B cell (primary cell): ENCODE measurements at regions of chr16 and their contacts with region 1.

Region 1: GRCh38 chr16:89700100-89700648 is 1.3 kb downstream of the SPATA2L start:
- DNase-seq: peak; percentile 99
- ATAC-seq: peak; percentile 38
- H3K4me3 ChIP-seq: peak overlapping the region; percentile 17 to 73 (median 68)
- H3K4me3 Mint-ChIP-seq: peak overlapping the region; percentile 85
- H3K27ac ChIP-seq: peak overlapping the region; percentile 76 to 82
- H3K27ac Mint-ChIP-seq: peak overlapping the region; percentile 83
- H3K4me1 ChIP-seq: peaks cover 21 to 29% of the 10 kb centered on the region in 2 donors
- H3K4me1 Mint-ChIP-seq: peaks cover 21% of the 10 kb centered on the region
- H3K27me3 ChIP-seq: no peaks in the 10 kb centered on the region
- H3K27me3 Mint-ChIP-seq: no peaks in the 10 kb centered on the region
- CTCF ChIP-seq: peak; percentile 74

Region 2: DNA sequence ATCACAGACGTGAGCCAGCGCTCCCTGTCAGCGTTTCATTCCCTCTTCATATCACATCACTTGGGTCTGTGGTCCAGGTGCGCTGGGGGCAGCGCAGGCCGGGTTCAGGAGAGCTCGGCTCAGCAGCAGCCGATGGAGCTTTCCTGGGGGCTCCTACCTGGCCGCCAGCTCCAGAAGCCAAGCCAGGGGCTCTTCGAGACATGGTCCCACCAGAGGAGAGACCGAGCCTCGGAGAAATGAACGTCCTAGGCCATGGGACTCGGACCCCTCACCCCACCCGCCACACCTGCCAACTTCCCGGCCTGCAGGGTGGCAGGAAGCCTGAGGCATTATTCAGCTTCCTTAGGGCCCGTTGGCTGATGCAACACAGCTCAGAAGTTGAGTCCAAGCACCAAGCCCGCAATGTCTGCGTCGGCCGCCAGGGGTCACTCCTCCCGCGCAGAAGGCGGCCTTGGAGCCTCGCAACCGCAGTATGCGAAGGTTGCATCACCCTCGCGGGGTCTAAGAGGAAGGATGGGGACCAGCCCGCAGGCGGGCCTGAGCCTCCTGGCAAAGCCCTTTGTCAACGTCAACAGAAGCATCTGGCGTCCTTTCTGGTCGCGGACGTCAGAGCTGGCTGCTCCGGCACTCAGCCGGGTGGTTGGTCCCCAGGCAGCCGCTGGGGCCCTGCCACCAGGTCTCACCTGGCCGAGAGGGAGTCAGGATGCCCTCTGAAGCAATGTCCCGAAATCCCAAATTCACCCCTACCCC is 1921.2 kb before region 1 on chr16:
- CTCF ChIA-PET with region 1: no interaction called
- POLR2A ChIA-PET with region 1: interaction called, 11 read pairs
- intact Hi-C with region 1: no loop called
- DNase-seq: peak; percentile 96
- ATAC-seq: peak; percentile 89
- H3K4me3 ChIP-seq: no peak overlapping the region
- H3K4me3 Mint-ChIP-seq: peak overlapping the region; percentile 75
- H3K27ac ChIP-seq: no peak overlapping the region
- H3K27ac Mint-ChIP-seq: peak overlapping the region; percentile 83
- H3K4me1 ChIP-seq: peaks cover 22 to 40% of the 10 kb centered on the region in 2 donors
- H3K4me1 Mint-ChIP-seq: peaks cover 33% of the 10 kb centered on the region
- H3K27me3 ChIP-seq: no peaks in the 10 kb centered on the region
- H3K27me3 Mint-ChIP-seq: peaks cover 9% of the 10 kb centered on the region
- CTCF ChIP-seq: peak; percentile 93

Region 3: GRCh38 chr16:89657442-89658220 is 42.5 kb before region 1 on chr16 and contains the starts of genes CHMP1A and SPATA33:
- CTCF ChIA-PET with region 1: interaction called, 6 read pairs
- POLR2A ChIA-PET with region 1: interaction called, 3 read pairs
- intact Hi-C with region 1: loop called (anchors 1 kb)
- DNase-seq: peak; percentile 96
- ATAC-seq: peak; percentile 89
- H3K4me3 ChIP-seq: peak within 1 kb of the TSS; percentile 42 to 97 (median 96)
- H3K4me3 Mint-ChIP-seq: peak within 1 kb of the TSS; percentile 89
- H3K27ac ChIP-seq: peak within 1 kb of the TSS; percentile 38 to 88
- H3K27ac Mint-ChIP-seq: peak within 1 kb of the TSS; percentile 85
- H3K4me1 ChIP-seq: peaks cover 14 to 20% of the 10 kb centered on the region in 2 donors
- H3K4me1 Mint-ChIP-seq: peaks cover 27% of the 10 kb centered on the region
- H3K27me3 ChIP-seq: no peaks in the 10 kb centered on the region
- H3K27me3 Mint-ChIP-seq: no peaks in the 10 kb centered on the region
- CTCF ChIP-seq: no peak
- total RNA-seq, gene CHMP1A: 88.1 and 90.0 TPM in 2 replicates
- total RNA-seq, gene SPATA33: 12.6 and 15.0 TPM in 2 replicates

Region 4: DNA sequence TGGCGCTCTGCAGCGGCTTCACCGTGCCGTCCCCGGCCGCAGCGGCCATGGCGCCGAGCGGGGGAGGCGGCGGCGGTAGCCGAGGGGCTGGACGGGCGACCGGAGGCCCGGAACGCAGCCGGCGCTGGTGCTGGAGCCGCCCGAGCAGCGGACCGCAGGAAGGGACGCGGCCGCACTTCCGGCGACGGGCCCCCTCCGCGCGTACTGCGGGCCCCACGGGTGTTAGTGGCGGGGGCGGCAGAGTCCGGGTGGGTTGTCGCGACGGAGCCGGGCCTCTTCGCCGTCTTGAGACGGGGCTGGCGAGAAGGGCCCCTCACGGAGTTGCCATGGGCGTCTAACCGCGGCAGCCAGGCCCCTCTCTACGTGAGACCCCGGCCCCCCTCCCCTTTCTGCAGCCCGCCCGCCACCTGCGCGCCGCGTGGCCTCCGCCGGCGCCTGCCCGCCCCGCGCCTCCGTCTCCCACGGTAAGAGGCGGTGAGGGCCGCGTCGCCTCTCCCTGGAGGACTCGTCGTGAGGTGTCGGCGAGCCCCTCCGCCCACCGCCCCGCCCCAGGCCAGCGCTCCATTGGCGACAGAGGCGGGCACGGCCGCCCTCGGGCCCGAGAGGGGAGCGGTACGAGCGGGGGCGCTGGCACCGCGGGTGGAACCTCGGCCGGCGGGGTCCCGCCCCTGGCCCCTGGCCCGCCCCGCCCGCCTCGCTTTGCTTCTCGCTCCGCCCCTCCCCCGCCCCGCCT is 20.8 kb after region 1 on chr16 and contains the starts of genes VPS9D1 and ZNF276:
- CTCF ChIA-PET with region 1: interaction called, 16 read pairs
- POLR2A ChIA-PET with region 1: no interaction called
- intact Hi-C with region 1: loop called (anchors 1 kb)
- DNase-seq: peak; percentile 90
- ATAC-seq: peak; percentile 71
- H3K4me3 ChIP-seq: peak within 1 kb of the TSS; percentile 61 to 97 (median 72)
- H3K4me3 Mint-ChIP-seq: peak within 1 kb of the TSS; percentile 88
- H3K27ac ChIP-seq: peak within 1 kb of the TSS; percentile 59 to 92
- H3K27ac Mint-ChIP-seq: peak within 1 kb of the TSS; percentile 92
- H3K4me1 ChIP-seq: peaks cover 27 to 34% of the 10 kb centered on the region in 2 donors
- H3K4me1 Mint-ChIP-seq: peaks cover 26% of the 10 kb centered on the region
- H3K27me3 ChIP-seq: no peaks in the 10 kb centered on the region
- H3K27me3 Mint-ChIP-seq: no peaks in the 10 kb centered on the region
- CTCF ChIP-seq: no peak
- total RNA-seq, gene VPS9D1: 14.6 and 15.1 TPM in 2 replicates
- total RNA-seq, gene ZNF276: 82.7 and 87.3 TPM in 2 replicates

Region 5: DNA sequence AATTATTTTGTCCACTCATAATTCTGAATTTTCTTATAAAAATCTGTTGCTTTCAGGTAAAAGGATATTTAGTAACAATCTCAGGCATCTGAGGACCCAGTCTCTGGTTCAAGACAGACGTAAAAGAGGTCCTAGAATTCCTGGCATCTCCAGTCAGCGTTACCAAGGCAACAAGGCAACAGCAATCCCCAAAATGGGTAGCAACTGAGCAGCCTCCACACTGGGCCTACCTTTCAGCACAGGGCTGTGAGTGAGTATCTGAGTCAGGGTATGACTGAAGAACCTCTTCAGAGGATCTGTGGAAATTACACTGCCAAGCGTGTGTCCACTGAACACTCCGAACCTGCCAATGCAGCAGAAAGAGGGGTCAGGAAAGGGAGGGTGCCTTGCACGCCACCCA is 95.5 kb after region 1 on chr16:
- CTCF ChIA-PET with region 1: interaction called, 171 read pairs
- POLR2A ChIA-PET with region 1: interaction called, 6 read pairs
- intact Hi-C with region 1: no loop called
- DNase-seq: no peak
- ATAC-seq: no peak
- H3K4me3 ChIP-seq: no peak overlapping the region
- H3K4me3 Mint-ChIP-seq: no peak overlapping the region
- H3K27ac ChIP-seq: no peak overlapping the region
- H3K27ac Mint-ChIP-seq: no peak overlapping the region
- H3K4me1 ChIP-seq: peaks cover 0 to 4% of the 10 kb centered on the region in 2 donors
- H3K4me1 Mint-ChIP-seq: peaks cover 2% of the 10 kb centered on the region
- H3K27me3 ChIP-seq: no peaks in the 10 kb centered on the region
- H3K27me3 Mint-ChIP-seq: no peaks in the 10 kb centered on the region
- CTCF ChIP-seq: no peak

Region 6: DNA sequence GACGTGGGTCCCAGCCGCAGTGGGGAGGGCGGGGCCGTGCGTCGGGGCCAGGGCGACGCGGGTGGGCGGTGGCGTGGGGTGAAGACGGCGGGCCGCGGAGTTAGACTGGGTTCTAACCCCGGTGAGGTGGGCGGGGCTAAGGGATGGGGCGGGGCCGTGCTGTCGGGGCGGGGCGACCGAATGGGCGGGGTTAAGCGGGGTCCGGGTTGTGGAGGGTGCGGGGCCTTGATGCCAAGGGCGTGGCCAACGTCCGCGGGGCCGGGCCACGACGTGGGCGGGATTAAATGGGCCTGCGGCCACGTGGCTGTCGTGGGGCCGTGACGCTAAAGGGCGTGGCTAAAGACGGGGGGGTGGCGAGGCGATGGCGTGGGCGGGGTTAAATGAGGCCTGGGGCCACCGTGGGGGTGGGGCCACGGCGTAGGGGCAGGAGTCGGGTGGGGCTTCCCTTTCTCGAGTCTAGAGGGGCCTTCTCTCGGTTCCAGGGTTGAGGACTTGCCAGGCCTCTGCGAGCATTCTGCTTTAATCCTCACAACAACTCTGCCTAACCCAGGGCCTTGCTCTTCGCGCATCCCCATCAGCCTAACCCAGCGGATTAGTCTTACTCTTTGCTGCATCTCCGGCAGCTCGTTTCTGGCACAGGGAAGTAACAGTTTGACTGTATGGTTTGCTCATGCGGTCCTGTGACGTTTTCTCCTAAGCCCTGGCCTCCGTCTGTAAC is 174.0 kb after region 1 on chr16:
- CTCF ChIA-PET with region 1: interaction called, 3 read pairs
- POLR2A ChIA-PET with region 1: interaction called, 13 read pairs
- intact Hi-C with region 1: loop called (anchors 1 kb)
- DNase-seq: peak; percentile 99
- ATAC-seq: peak; percentile 82
- H3K4me3 ChIP-seq: peak overlapping the region in 4 of 5 experiments; percentile 92 to 99 (median 97)
- H3K4me3 Mint-ChIP-seq: peak overlapping the region; percentile 95
- H3K27ac ChIP-seq: peak overlapping the region; percentile 100
- H3K27ac Mint-ChIP-seq: peak overlapping the region; percentile 99
- H3K4me1 ChIP-seq: peaks cover 14 to 19% of the 10 kb centered on the region in 2 donors
- H3K4me1 Mint-ChIP-seq: peaks cover 16% of the 10 kb centered on the region
- H3K27me3 ChIP-seq: no peaks in the 10 kb centered on the region
- H3K27me3 Mint-ChIP-seq: no peaks in the 10 kb centered on the region
- CTCF ChIP-seq: no peak